Caco-2 (cell line): ENCODE measurements at regions of chr3 and their contacts with region 1.

Region 1: DNA sequence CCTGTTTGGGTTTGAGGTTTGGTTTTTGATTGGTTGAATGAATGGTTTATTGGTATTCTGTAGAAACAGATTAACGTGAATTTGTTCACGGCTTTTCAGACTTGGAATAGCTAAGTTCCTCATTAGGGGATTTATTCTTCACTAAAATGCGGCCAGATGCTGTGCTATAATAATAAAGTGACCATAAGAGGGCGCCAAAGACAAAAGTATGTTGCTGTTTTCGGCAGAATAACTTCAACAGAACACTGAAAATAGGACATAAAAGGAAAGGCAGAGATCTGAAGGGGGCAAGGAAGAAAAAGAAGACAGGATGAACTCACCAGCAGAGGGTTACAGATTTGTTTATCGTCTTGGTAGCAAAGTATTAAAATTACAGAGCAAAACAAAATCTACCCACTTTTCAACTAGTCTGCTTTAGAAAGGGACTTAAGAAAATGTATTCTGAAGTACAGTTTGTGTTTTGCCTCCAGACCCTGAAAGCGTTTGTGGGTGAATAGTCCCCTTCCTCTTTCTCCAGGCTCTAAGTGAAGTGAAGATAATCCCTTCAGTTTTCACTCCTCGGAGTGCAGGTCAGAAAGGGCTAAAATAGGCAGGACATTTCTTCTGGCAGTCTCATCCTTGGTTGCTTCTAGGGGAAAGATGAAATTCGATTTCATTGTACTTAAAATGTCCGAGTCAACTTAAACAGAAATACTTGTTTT is 147.6 kb downstream of the IL20RB start:
- DNase-seq: peak in 1 of 2 experiments; percentile 54
- H3K4me3 ChIP-seq: no peak overlapping the region
- H3K4me3 Mint-ChIP-seq: no peak overlapping the region
- H3K27ac Mint-ChIP-seq: no peak overlapping the region
- H3K4me1 ChIP-seq: no peaks in the 10 kb centered on the region
- H3K4me1 Mint-ChIP-seq: no peaks in the 10 kb centered on the region
- H3K27me3 ChIP-seq: no peaks in the 10 kb centered on the region; the same call in 1 of the 2 replicates
- H3K27me3 Mint-ChIP-seq: peaks cover 12% of the 10 kb centered on the region
- CTCF ChIP-seq: peak; percentile 56 to 67

Region 2: DNA sequence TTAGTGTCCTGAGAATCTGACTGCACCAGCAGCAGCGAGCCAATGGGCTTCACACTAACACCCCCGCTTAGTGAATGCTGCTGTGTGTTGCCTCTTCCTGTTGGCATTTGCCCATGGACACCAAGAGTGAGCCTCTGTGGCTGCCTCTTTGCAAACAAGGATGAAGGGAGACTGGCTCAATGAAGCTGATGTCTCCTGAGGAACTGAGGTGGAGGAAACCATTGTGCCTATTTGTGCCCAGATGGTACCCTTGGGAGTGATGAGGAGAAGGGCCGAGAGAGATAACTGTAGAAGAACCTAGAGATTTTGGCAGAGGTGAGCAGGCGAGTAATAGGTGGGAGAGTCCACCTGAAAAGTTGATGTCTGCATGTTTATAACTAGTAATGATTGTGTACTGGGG is 96.5 kb before region 1 on chr3:
- CTCF ChIA-PET with region 1: no interaction called
- POLR2A ChIA-PET with region 1: no interaction called
- intact Hi-C with region 1: no loop called
- DNase-seq: no peak
- H3K4me3 ChIP-seq: no peak overlapping the region
- H3K4me3 Mint-ChIP-seq: no peak overlapping the region
- H3K27ac Mint-ChIP-seq: no peak overlapping the region
- H3K4me1 ChIP-seq: no peaks in the 10 kb centered on the region
- H3K4me1 Mint-ChIP-seq: no peaks in the 10 kb centered on the region
- H3K27me3 ChIP-seq: no peaks in the 10 kb centered on the region
- H3K27me3 Mint-ChIP-seq: no peaks in the 10 kb centered on the region
- CTCF ChIP-seq: no peak

Region 3: DNA sequence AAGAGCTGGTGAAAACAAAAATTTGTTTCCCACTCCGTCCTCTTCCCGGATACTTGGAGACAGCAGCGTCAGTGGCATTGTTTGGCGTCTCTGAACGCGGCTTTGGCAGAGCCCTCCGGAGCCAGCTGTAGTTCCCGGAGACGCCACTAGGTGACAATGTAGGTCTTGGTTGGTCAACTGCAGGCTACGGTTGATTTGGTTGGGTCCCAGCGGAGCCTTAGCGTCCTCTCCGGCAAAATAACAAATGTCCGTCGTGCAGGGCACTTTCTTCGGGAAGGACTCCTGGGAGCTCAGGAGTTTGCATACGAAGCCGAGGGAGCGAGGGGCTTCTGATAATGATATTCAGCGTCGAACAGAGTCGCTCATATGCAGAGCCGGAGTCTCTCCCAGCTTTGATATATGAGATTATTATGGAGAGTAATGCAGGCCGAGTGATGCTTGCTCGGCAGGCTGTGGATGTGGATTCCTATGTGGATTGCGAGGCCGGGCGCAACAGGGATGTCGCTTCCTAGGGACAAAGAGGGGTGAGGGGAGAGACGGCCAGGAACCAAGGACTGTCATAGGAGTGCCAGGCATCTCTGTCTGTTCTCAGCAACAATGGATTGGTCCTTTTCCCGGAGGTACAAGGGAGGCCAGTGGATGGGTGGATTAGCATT is 72.8 kb before region 1 on chr3:
- CTCF ChIA-PET with region 1: interaction called, 6 read pairs
- POLR2A ChIA-PET with region 1: no interaction called
- intact Hi-C with region 1: loop called (anchors 1 kb)
- DNase-seq: peak; percentile 76 to 79
- H3K4me3 ChIP-seq: no peak overlapping the region
- H3K4me3 Mint-ChIP-seq: no peak overlapping the region
- H3K27ac Mint-ChIP-seq: peak overlapping the region; percentile 1
- H3K4me1 ChIP-seq: no peaks in the 10 kb centered on the region
- H3K4me1 Mint-ChIP-seq: no peaks in the 10 kb centered on the region
- H3K27me3 ChIP-seq: no peaks in the 10 kb centered on the region
- H3K27me3 Mint-ChIP-seq: no peaks in the 10 kb centered on the region
- CTCF ChIP-seq: peak; percentile 79 to 91

Region 4: GRCh38 chr3:137071104-137071503 is 34.3 kb before region 1 on chr3:
- CTCF ChIA-PET with region 1: no interaction called
- POLR2A ChIA-PET with region 1: no interaction called
- intact Hi-C with region 1: no loop called
- DNase-seq: no peak
- H3K4me3 ChIP-seq: no peak overlapping the region
- H3K4me3 Mint-ChIP-seq: no peak overlapping the region
- H3K27ac Mint-ChIP-seq: no peak overlapping the region
- H3K4me1 ChIP-seq: no peaks in the 10 kb centered on the region
- H3K4me1 Mint-ChIP-seq: peaks cover 6% of the 10 kb centered on the region
- H3K27me3 ChIP-seq: no peaks in the 10 kb centered on the region
- H3K27me3 Mint-ChIP-seq: peaks cover under 1% of the 10 kb centered on the region
- CTCF ChIP-seq: no peak

Region 5: GRCh38 chr3:137259701-137260100 is 154.3 kb after region 1 on chr3:
- CTCF ChIA-PET with region 1: no interaction called
- POLR2A ChIA-PET with region 1: no interaction called
- intact Hi-C with region 1: no loop called
- DNase-seq: peak in 1 of 2 experiments; percentile 10
- H3K4me3 ChIP-seq: no peak overlapping the region
- H3K4me3 Mint-ChIP-seq: no peak overlapping the region
- H3K27ac Mint-ChIP-seq: no peak overlapping the region
- H3K4me1 ChIP-seq: no peaks in the 10 kb centered on the region
- H3K4me1 Mint-ChIP-seq: no peaks in the 10 kb centered on the region
- H3K27me3 ChIP-seq: no peaks in the 10 kb centered on the region; the same call in 1 of the 2 replicates
- H3K27me3 Mint-ChIP-seq: peaks cover 12% of the 10 kb centered on the region
- CTCF ChIP-seq: no peak

Region 6: GRCh38 chr3:137692803-137693431 is 587.5 kb after region 1 on chr3:
- CTCF ChIA-PET with region 1: interaction called, 3 read pairs
- POLR2A ChIA-PET with region 1: no interaction called
- intact Hi-C with region 1: loop called (anchors 1 kb)
- DNase-seq: peak; percentile 55 to 65
- H3K4me3 ChIP-seq: no peak overlapping the region
- H3K4me3 Mint-ChIP-seq: no peak overlapping the region
- H3K27ac Mint-ChIP-seq: no peak overlapping the region
- H3K4me1 ChIP-seq: no peaks in the 10 kb centered on the region
- H3K4me1 Mint-ChIP-seq: no peaks in the 10 kb centered on the region
- H3K27me3 ChIP-seq: no peaks in the 10 kb centered on the region
- H3K27me3 Mint-ChIP-seq: peaks cover 13% of the 10 kb centered on the region
- CTCF ChIP-seq: peak; percentile 77 to 82

Region 7: DNA sequence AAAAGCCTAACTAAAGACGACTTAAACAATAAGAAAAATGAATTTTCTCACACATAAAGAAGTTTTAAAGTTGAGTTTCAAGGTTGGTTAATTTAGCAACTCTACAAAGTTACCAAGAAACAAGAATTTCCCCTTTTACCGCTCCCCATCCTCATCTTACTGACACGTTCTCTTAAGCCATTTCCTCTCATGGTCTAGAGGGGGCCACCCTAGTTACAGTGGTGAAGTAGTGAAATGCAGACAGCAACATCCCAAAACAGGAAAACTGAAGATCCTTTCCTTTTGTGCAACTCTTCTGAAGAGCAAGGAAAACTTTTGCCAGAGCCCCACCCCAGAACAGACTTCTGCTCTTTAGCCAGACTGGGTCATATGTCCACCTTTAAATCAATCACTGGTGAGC is 641.4 kb after region 1 on chr3:
- CTCF ChIA-PET with region 1: no interaction called
- POLR2A ChIA-PET with region 1: no interaction called
- intact Hi-C with region 1: no loop called
- DNase-seq: no peak
- H3K4me3 ChIP-seq: no peak overlapping the region
- H3K4me3 Mint-ChIP-seq: no peak overlapping the region
- H3K27ac Mint-ChIP-seq: no peak overlapping the region
- H3K4me1 ChIP-seq: no peaks in the 10 kb centered on the region
- H3K4me1 Mint-ChIP-seq: no peaks in the 10 kb centered on the region
- H3K27me3 ChIP-seq: no peaks in the 10 kb centered on the region
- H3K27me3 Mint-ChIP-seq: peaks cover 15% of the 10 kb centered on the region
- CTCF ChIP-seq: no peak

Region 8: DNA sequence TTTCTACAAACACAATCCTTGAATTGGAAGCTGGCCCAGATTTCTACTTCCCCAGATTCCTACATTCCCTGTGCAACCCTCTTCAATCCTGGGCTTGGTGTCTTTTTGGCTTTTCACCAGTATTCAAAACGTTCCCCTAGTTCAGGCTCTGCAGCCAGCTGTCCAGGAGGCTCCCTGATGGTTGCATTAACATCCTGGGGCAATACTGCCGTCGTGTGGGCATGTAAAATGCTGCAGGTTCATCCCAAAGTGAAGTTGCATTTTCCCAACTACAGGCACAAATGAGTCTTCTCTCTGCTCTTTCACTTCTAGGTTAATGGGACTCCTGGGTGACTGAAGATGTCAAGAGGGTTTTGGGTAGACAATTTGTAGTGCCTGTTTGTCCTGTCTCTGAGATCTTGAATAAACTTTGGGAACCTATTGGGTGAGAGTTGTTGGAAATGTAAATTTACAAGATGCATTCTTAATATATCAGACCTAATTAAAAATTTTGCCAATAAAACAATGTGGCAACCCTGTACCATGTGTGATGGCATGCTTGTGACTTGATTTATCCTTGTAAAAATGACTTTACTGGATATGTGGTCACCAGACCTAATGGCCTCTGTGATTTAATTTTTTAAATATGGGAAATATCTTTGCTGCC is 687.3 kb after region 1 on chr3:
- CTCF ChIA-PET with region 1: no interaction called
- POLR2A ChIA-PET with region 1: no interaction called
- intact Hi-C with region 1: loop called (anchors 1 kb)
- DNase-seq: peak; percentile 46 to 49
- H3K4me3 ChIP-seq: no peak overlapping the region
- H3K4me3 Mint-ChIP-seq: no peak overlapping the region
- H3K27ac Mint-ChIP-seq: no peak overlapping the region
- H3K4me1 ChIP-seq: no peaks in the 10 kb centered on the region
- H3K4me1 Mint-ChIP-seq: no peaks in the 10 kb centered on the region
- H3K27me3 ChIP-seq: no peaks in the 10 kb centered on the region
- H3K27me3 Mint-ChIP-seq: no peaks in the 10 kb centered on the region
- CTCF ChIP-seq: peak; percentile 41 to 58

Region 9: DNA sequence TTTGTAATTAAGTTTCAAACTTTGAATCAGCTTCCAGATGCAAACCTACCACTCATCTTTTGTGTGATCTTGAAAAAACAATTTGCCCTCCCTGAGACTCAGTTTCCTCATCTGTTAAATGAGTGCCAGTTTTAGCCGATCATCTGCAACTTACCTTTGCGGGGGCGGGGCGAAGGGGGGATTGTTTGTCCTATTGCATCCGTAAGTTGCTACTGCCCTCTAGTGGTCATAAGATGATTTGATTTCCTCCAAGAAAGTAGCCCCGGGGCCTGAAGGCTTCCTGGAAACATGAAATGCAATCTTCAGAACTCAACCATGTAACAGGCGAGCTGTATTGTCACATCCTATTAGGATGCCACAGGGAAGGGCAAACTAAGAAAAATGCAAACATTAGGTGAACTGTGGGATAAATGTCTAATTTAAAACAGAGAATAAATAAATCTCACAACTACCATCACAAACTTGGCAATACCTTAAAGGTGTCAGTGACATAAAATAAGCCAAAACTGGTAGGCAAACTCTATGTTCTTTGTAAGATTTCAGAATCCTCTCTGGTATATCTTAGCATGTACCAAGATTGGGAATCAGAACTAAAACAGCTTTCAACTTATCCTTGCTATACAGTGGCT is 841.0 kb after region 1 on chr3:
- CTCF ChIA-PET with region 1: no interaction called
- POLR2A ChIA-PET with region 1: no interaction called
- intact Hi-C with region 1: loop called (anchors 1 kb)
- DNase-seq: peak; percentile 56 to 75
- H3K4me3 ChIP-seq: no peak overlapping the region
- H3K4me3 Mint-ChIP-seq: no peak overlapping the region
- H3K27ac Mint-ChIP-seq: no peak overlapping the region
- H3K4me1 ChIP-seq: no peaks in the 10 kb centered on the region
- H3K4me1 Mint-ChIP-seq: no peaks in the 10 kb centered on the region
- H3K27me3 ChIP-seq: no peaks in the 10 kb centered on the region
- H3K27me3 Mint-ChIP-seq: peaks cover 4% of the 10 kb centered on the region
- CTCF ChIP-seq: peak; percentile 62 to 78

Region 10: GRCh38 chr3:137970914-137971831 is 865.7 kb after region 1 on chr3:
- CTCF ChIA-PET with region 1: interaction called, 3 read pairs
- POLR2A ChIA-PET with region 1: no interaction called
- intact Hi-C with region 1: loop called (anchors 1 kb)
- DNase-seq: peak; percentile 80 to 84
- H3K4me3 ChIP-seq: no peak overlapping the region
- H3K4me3 Mint-ChIP-seq: peak overlapping the region; percentile 71
- H3K27ac Mint-ChIP-seq: no peak overlapping the region
- H3K4me1 ChIP-seq: no peaks in the 10 kb centered on the region
- H3K4me1 Mint-ChIP-seq: no peaks in the 10 kb centered on the region
- H3K27me3 ChIP-seq: no peaks in the 10 kb centered on the region
- H3K27me3 Mint-ChIP-seq: no peaks in the 10 kb centered on the region
- CTCF ChIP-seq: peak; percentile 76 to 90

Region 11: GRCh38 chr3:138051946-138052802 is 946.7 kb after region 1 on chr3:
- CTCF ChIA-PET with region 1: no interaction called
- POLR2A ChIA-PET with region 1: interaction called, 3 read pairs
- intact Hi-C with region 1: loop called (anchors 2 kb)
- DNase-seq: peak in 1 of 2 experiments; percentile 64
- H3K4me3 ChIP-seq: no peak overlapping the region
- H3K4me3 Mint-ChIP-seq: no peak overlapping the region
- H3K27ac Mint-ChIP-seq: no peak overlapping the region
- H3K4me1 ChIP-seq: no peaks in the 10 kb centered on the region
- H3K4me1 Mint-ChIP-seq: no peaks in the 10 kb centered on the region
- H3K27me3 ChIP-seq: no peaks in the 10 kb centered on the region
- H3K27me3 Mint-ChIP-seq: peaks cover 2% of the 10 kb centered on the region
- CTCF ChIP-seq: peak; percentile 63 to 82